Ascending aorta (tissue), 2 donors: ENCODE measurements at regions of chr3 and their contacts with region 1.

Region 1: GRCh38 chr3:39107388-39108199 is at the starts of genes GORASP1 and TTC21A:
- DNase-seq: peak; percentile 65 to 95
- H3K4me3 ChIP-seq: peak within 1 kb of the TSS; percentile 94 to 96
- H3K27ac ChIP-seq: peak within 1 kb of the TSS; percentile 97 to 99
- H3K4me1 ChIP-seq: peaks cover 0 to 21% of the 10 kb centered on the region in 2 donors
- H3K27me3 ChIP-seq: no peaks in the 10 kb centered on the region
- CTCF ChIP-seq: no peak
- total RNA-seq, gene GORASP1: 186 TPM
- total RNA-seq, gene TTC21A: 0.43 TPM

Region 2: DNA sequence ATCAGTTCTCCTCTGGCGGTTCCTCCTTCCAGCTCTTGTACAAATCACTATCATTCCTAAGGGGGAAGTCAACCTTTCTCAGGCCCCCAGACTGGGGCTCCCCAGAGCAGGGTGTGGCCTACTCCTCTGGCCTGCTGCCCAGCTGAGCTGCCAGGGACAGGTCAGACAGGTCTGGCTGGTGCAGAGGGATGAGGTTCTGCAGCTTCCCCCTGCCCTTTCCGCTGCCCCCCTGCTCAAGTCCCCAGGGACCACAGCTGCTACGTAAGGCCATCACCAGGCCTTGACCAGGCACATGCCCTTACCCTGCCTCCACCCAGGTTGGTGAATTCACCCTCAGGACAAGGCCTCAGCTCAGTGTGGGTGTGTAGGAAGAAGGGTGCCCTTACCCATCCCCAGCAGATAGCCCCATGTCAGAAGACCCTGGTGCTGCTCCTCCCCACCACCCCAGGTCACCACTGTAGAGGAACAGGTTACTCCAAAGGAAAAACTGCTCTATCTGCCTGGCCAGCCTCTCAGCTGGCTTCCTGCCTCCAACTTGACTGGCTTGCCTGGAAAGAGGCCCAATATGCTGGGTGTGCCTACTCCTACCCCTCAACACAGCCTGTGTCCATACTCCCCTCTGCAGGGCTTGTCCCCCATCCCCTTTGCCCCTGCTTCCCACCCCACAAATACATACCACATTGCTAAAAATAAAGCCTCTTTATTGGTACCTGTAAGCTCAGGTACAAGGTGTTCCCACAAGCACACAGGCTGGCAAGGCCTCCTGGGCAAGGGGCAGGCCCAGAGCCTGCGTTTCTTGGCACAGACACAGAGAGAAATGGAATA is 33.8 kb after region 1 on chr3:
- intact Hi-C with region 1: loop called (anchors 1 kb)
- DNase-seq: no peak
- H3K4me3 ChIP-seq: no peak overlapping the region
- H3K27ac ChIP-seq: peak overlapping the region; percentile 20 to 32
- H3K4me1 ChIP-seq: peaks cover 23 to 36% of the 10 kb centered on the region in 2 donors
- H3K27me3 ChIP-seq: no peaks in the 10 kb centered on the region
- CTCF ChIP-seq: no peak

Region 3: DNA sequence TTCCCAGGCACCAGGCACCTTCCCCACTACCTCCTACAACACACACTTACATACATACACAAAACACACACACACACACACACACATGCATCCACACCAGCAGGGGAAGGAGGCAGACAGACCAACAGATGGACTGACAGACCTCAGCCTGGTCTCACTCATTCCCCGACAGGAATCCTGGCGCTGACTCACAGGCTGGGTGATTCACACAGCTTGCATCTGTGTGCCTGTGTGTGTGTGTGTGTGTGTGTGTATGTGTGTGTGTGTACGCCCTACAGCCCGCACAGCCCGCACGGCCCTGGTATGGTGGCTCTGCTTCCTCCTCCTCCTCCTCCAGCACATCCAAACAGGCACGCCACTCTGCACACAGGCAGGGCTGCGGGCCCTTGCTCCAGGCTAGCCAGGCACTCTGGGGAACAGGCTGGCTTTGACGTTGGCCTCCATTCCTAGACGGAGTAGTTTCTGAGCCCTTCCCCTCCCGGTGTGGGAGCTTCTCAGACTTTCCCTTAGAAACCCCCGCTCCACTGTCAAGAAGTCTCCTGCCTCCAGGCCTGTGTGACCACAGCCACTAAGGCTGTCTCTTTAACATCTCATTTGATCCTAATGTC is 39.5 kb after region 1 on chr3:
- intact Hi-C with region 1: loop called (anchors 2 kb)
- DNase-seq: peak; percentile 81 to 95
- H3K4me3 ChIP-seq: peak overlapping the region; percentile 36 to 91
- H3K27ac ChIP-seq: peak overlapping the region; percentile 97 to 99
- H3K4me1 ChIP-seq: peaks cover 44 to 54% of the 10 kb centered on the region in 2 donors
- H3K27me3 ChIP-seq: no peaks in the 10 kb centered on the region
- CTCF ChIP-seq: peak in 1 of 3 experiments; percentile 18

Region 4: DNA sequence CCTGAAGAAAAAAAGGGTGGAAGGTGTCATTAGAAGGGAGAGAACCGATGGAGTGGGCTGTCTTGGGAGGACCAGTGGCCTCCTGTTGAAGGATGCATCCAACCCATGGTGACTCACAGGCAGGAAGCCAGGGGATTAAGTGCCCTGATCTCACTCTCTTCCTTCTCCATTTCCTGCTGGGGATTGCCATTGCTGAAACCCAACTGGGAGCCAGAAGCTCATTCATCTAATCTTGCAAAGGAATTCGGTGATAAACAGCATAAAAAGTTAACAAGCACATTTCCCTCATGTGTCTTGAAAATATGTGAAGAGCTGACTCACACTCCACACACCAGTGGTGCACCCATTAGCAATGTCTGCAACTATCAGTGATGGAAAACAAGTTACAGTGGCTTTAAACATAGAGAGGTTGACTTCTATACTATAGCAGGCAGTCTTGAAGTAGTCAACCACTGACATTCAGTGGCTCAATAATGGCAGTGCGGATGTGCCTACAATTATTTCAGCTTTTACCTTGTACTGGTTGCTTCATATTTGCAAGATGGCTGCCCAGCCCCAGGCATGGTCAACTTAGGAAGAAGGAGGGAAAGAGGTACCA is 58.6 kb after region 1 on chr3:
- intact Hi-C with region 1: no loop called
- DNase-seq: no peak
- H3K4me3 ChIP-seq: no peak overlapping the region
- H3K27ac ChIP-seq: no peak overlapping the region
- H3K4me1 ChIP-seq: no peaks in the 10 kb centered on the region
- H3K27me3 ChIP-seq: no peaks in the 10 kb centered on the region
- CTCF ChIP-seq: no peak

Region 5: GRCh38 chr3:39180546-39181346 is 73.2 kb after region 1 on chr3:
- intact Hi-C with region 1: loop called (anchors 2 kb)
- DNase-seq: peak; percentile 82 to 97
- H3K4me3 ChIP-seq: peak overlapping the region; percentile 49 to 54
- H3K27ac ChIP-seq: peak overlapping the region; percentile 93 to 94
- H3K4me1 ChIP-seq: peaks cover 19 to 37% of the 10 kb centered on the region in 2 donors
- H3K27me3 ChIP-seq: no peaks in the 10 kb centered on the region
- CTCF ChIP-seq: peak; percentile 19 to 35 (median 30)